Adrenal gland (tissue), 19 donors: ENCODE measurements at regions of chr14 and their contacts with region 1.

Region 1: GRCh38 chr14:45526715-45527549 is 273.9 kb upstream of the MIS18BP1 start:
- DNase-seq: peak; percentile 20 to 64 (median 34)
- H3K4me3 ChIP-seq: no peak overlapping the region
- H3K27ac ChIP-seq: no peak overlapping the region
- H3K4me1 ChIP-seq: no peaks in the 10 kb centered on the region
- H3K27me3 ChIP-seq: no peaks in the 10 kb centered on the region
- CTCF ChIP-seq: peak; percentile 6 to 71 (median 50)
- POLR2A ChIP-seq: no peak

Region 2: GRCh38 chr14:45298423-45299117 is 228.4 kb before region 1 on chr14:
- intact Hi-C with region 1: loop called in 1 of 2 experiments (anchors 10 kb)
- DNase-seq: no peak
- H3K4me3 ChIP-seq: no peak overlapping the region
- H3K27ac ChIP-seq: no peak overlapping the region
- H3K4me1 ChIP-seq: no peaks in the 10 kb centered on the region
- H3K27me3 ChIP-seq: no peaks in the 10 kb centered on the region
- CTCF ChIP-seq: no peak
- POLR2A ChIP-seq: no peak

Region 3: GRCh38 chr14:45434221-45434620 is 92.7 kb before region 1 on chr14:
- intact Hi-C with region 1: loop called in 1 of 2 experiments (anchors 10 kb)
- DNase-seq: no peak
- H3K4me3 ChIP-seq: no peak overlapping the region
- H3K27ac ChIP-seq: no peak overlapping the region
- H3K4me1 ChIP-seq: no peaks in the 10 kb centered on the region
- H3K27me3 ChIP-seq: no peaks in the 10 kb centered on the region
- CTCF ChIP-seq: no peak
- POLR2A ChIP-seq: no peak

Region 4: GRCh38 chr14:45587142-45587541 is 60.2 kb after region 1 on chr14:
- intact Hi-C with region 1: no loop called
- DNase-seq: no peak
- H3K4me3 ChIP-seq: no peak overlapping the region
- H3K27ac ChIP-seq: no peak overlapping the region
- H3K4me1 ChIP-seq: no peaks in the 10 kb centered on the region
- H3K27me3 ChIP-seq: no peaks in the 10 kb centered on the region
- CTCF ChIP-seq: no peak
- POLR2A ChIP-seq: no peak

Region 5: DNA sequence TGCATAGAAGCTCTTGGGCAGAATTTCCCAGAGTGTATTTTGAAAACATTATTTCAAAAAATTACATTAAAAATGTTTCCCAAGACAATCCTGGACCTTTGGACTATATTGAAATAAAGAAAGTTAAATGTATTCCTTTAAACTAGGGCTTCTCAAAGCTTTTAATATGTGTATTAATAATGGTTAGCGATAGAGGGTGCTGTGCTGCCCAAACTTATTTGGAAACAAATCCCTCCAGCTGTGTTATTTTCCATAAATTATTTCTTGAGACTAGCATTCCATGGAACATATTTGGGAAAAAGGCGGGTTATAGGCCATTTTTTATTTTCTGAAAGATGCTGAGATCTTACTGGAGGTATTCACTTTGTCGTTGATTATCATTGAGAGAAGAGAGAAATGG is 123.8 kb after region 1 on chr14:
- intact Hi-C with region 1: no loop called
- DNase-seq: no peak
- H3K4me3 ChIP-seq: no peak overlapping the region
- H3K27ac ChIP-seq: no peak overlapping the region
- H3K4me1 ChIP-seq: no peaks in the 10 kb centered on the region
- H3K27me3 ChIP-seq: no peaks in the 10 kb centered on the region
- CTCF ChIP-seq: no peak
- POLR2A ChIP-seq: no peak

Region 6: DNA sequence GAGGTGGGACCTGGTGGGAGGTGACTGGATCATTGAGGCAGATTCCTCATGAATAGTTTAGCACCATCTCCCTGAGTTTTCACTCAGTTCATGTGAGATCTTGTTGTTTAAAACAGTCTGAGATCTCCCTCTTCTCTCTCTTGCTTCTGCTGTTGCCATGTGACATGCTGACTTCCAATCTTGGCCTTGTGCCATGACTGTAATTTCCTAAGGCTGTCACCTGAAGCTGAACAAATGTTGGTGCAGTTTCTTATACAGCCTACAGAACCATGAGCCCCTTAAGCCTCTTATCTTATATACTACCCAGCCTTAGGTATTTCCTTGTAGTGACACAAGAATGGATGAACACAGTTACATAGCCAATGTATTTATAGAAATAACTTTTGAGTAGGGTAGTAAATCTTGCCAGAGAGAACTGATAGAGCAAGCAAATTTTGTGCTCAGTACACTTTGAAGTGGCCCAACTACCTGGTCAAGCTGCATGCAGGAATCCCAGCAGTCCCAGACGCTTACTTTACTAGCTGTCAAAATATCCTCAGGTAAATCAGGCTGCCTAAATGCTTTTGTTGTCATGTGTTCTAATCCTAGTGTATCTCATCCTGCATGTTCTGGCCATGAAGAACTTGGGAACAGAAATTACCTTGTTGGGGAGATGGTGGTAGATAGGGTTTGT is 171.7 kb after region 1 on chr14:
- intact Hi-C with region 1: no loop called
- DNase-seq: peak in 6 of 7 donors; percentile 10 to 57 (median 26)
- H3K4me3 ChIP-seq: no peak overlapping the region
- H3K27ac ChIP-seq: no peak overlapping the region
- H3K4me1 ChIP-seq: peaks cover 0 to 6% of the 10 kb centered on the region in 2 donors
- H3K27me3 ChIP-seq: no peaks in the 10 kb centered on the region
- CTCF ChIP-seq: no peak
- POLR2A ChIP-seq: no peak